Aorta (tissue), 5 donors: ENCODE measurements at regions of chr9 and their contacts with region 1.

Region 1: DNA sequence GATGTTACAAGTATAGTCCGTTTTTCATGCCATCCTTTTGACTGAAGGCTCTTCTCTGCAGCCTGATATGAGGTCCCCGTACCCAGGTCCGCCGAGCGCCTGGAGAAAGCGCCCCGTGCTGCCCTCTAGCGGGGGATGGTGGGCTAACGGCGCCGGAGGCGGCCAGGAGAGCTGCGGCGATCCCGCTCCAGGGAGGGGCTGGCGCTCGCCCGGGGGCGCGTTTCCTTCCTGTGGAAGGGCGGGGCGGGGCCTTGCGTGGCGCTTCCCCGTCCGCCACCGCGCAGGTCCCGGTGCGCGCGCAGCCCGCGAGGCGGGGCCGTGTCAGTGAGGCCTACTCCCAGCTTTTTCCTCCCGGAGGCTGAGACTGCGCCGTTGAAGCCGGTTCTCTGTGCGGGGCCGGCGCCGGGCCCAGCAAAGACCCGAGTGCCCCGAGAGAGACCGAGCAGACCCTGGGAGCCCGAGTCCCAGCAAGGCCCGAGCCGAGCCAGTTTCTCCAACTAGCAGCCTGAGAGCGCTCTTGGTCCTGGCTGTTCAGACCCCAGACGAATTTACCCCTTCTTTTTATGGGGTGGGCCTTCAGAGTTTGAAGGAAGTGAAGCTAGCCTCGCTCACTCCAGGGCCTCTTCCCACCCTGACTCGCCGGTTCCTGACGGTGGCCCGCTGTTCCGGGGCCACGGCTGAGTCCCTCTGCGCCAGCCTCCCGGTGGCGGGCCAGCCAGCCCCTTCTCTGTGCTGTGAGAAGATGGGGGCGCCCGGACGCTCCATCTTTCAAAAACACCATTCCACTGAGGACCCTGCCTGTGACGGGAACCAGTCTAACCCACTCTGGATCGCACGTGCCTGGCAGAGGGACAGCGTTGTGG is 9.7 kb upstream of the PHF2 start:
- DNase-seq: peak; percentile 99 to 100
- ATAC-seq: peak; percentile 100
- H3K4me3 ChIP-seq: peak overlapping the region; percentile 37 to 56
- H3K27ac ChIP-seq: peak overlapping the region; percentile 64 to 83
- H3K4me1 ChIP-seq: no peaks in the 10 kb centered on the region
- H3K27me3 ChIP-seq: no peaks in the 10 kb centered on the region

Region 2: DNA sequence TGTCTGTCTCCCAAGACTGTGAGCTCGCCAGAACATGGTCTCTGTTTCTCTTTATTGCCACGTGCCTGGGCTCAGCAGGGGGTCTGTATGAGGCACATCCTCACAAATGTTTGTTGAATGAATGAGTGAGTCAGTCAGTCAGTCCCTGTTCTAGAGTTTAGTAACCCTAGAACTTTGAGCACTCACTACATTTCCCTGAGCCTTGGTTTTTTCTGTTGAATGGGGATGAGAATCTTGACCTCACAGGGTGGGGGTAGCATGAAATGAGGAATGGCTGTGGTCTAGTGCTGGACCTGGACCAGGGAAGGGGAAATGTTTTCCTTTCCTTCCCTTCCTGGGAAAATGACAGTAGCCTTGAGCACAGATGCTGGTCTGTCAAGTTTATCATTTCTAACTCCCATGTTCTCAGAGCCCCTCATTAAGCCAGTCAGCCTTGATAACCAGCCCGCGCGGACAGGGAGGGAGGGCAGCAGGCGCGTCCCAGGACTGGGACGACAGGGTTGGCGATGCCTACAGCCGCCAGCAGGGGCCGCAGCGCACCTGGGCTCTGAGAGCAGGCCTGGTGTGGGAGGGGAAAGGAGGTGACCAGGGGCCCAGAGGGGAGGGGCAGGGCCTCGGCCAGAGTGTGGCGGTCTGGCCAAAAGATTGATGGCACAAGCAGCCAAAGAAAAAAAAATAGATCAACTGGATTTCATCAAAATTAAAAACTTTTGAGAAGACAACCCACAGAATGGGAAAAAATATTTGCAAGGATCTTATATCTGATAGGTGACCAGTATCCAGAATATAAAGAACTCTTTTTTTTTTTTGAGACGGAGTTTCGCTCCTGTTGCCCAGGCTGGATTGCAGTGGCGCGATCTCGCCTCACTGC is 406.8 kb before region 1 on chr9:
- intact Hi-C with region 1: loop called (anchors 10 kb)
- DNase-seq: peak; percentile 89 to 94
- ATAC-seq: peak; percentile 96
- H3K4me3 ChIP-seq: no peak overlapping the region
- H3K27ac ChIP-seq: no peak overlapping the region
- H3K4me1 ChIP-seq: no peaks in the 10 kb centered on the region
- H3K27me3 ChIP-seq: no peaks in the 10 kb centered on the region

Region 3: DNA sequence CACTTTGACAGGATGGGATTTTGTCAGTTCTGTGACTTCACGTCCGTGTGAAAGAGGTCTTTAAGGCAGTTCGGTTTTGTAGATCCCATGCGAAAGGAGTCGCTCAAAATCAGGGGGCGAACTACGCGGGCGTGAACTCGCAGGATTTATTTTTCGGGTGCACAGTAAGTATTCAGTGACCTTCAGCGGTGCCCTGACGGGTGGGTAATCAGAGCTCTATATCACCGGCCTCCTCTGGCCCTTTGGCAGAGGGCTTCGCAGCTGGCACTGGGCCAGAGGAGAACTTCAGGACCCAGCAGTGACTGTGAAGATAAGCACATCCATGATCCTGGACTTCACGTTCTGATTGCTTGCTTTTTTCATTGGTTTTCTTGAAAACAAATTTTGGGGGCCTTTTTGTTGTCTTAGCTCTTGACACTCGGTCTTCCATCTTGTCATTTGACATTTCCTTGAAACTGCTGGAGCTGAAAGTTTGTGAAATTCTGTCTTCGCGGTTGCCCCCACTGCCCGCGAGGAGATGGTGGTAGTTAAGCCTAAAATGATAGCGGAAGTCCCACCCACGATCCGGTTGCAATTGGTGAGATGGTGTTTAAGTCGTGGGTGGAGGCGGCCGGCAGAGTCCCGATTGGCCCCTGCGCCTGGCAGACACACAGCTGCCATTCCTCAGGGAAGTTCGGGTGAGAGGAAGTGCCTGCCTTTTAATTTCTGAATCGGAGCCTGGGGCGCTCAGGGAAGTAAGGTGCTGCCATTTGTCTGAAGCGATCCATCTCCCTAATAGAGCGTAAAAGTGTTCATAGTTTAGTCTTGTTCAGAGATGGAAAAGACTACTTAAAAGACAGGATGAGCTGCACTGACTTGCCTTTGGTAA is 113.4 kb before region 1 on chr9 and contains the start of gene FAM120AOS:
- intact Hi-C with region 1: loop called (anchors 1 to 5 kb)
- DNase-seq: peak; percentile 95
- ATAC-seq: peak; percentile 91
- H3K4me3 ChIP-seq: peak within 1 kb of the TSS; percentile 93 to 98
- H3K27ac ChIP-seq: peak within 1 kb of the TSS; percentile 64 to 79
- H3K4me1 ChIP-seq: peaks cover 2% of the 10 kb centered on the region in 2 donors
- H3K27me3 ChIP-seq: no peaks in the 10 kb centered on the region
- total RNA-seq, gene FAM120AOS: 38.3 to 40.1 TPM

Region 4: GRCh38 chr9:93776873-93777272 is 210.2 kb after region 1 on chr9:
- intact Hi-C with region 1: no loop called
- DNase-seq: no peak
- ATAC-seq: no peak
- H3K4me3 ChIP-seq: no peak overlapping the region
- H3K27ac ChIP-seq: no peak overlapping the region
- H3K4me1 ChIP-seq: no peaks in the 10 kb centered on the region
- H3K27me3 ChIP-seq: no peaks in the 10 kb centered on the region